ENCODE measurements at regions of chr5 and their contacts with region 1.

Region 1: GRCh38 chr5:76180814-76181805 is 97.9 kb downstream of the SV2C start:
- DNase-seq: peak; percentile 28
- ATAC-seq: peak; percentile 82
- H3K4me3 Mint-ChIP-seq: no peak overlapping the region
- H3K27ac Mint-ChIP-seq: no peak overlapping the region
- H3K4me1 Mint-ChIP-seq: peaks cover 21% of the 10 kb centered on the region
- H3K27me3 Mint-ChIP-seq: no peaks in the 10 kb centered on the region

Region 2: GRCh38 chr5:76571559-76571958 is 390.4 kb after region 1 on chr5:
- CTCF ChIA-PET with region 1: no interaction called
- POLR2A ChIA-PET with region 1: no interaction called
- intact Hi-C with region 1: loop called in 1 of 2 experiments (anchors 10 kb)
- DNase-seq: no peak
- ATAC-seq: no peak
- H3K4me3 Mint-ChIP-seq: no peak overlapping the region
- H3K27ac Mint-ChIP-seq: no peak overlapping the region
- H3K4me1 Mint-ChIP-seq: peaks cover 7% of the 10 kb centered on the region
- H3K27me3 Mint-ChIP-seq: no peaks in the 10 kb centered on the region

Measured in activated CD4-positive, alpha-beta T cell treated with anti-CD3 and anti-CD28 coated beads for 36 hours (primary cell).